Naive thymus-derived CD4-positive, alpha-beta T cell (primary cell): ENCODE measurements at regions of chr3 and their contacts with region 1.

Region 1: GRCh38 chr3:78424656-78425055 is 1343.1 kb downstream of the ROBO1 start:
- DNase-seq: no peak
- ATAC-seq: no peak
- H3K4me3 ChIP-seq: no peak overlapping the region
- H3K4me3 Mint-ChIP-seq: no peak overlapping the region
- H3K27ac ChIP-seq: no peak overlapping the region
- H3K27ac Mint-ChIP-seq: no peak overlapping the region
- H3K4me1 ChIP-seq: no peaks in the 10 kb centered on the region
- H3K4me1 Mint-ChIP-seq: no peaks in the 10 kb centered on the region
- H3K27me3 ChIP-seq: no peaks in the 10 kb centered on the region
- H3K27me3 Mint-ChIP-seq: no peaks in the 10 kb centered on the region

Region 2: GRCh38 chr3:77338195-77338594 is 1086.5 kb before region 1 on chr3:
- CTCF ChIA-PET with region 1: no interaction called
- POLR2A ChIA-PET with region 1: no interaction called
- intact Hi-C with region 1: loop called in 1 of 2 experiments (anchors 5 kb)
- DNase-seq: no peak
- ATAC-seq: no peak
- H3K4me3 ChIP-seq: no peak overlapping the region
- H3K4me3 Mint-ChIP-seq: no peak overlapping the region
- H3K27ac ChIP-seq: no peak overlapping the region
- H3K27ac Mint-ChIP-seq: no peak overlapping the region
- H3K4me1 ChIP-seq: no peaks in the 10 kb centered on the region
- H3K4me1 Mint-ChIP-seq: no peaks in the 10 kb centered on the region
- H3K27me3 ChIP-seq: no peaks in the 10 kb centered on the region
- H3K27me3 Mint-ChIP-seq: no peaks in the 10 kb centered on the region

Region 3: GRCh38 chr3:78506581-78507195 is 82.0 kb after region 1 on chr3:
- CTCF ChIA-PET with region 1: no interaction called
- POLR2A ChIA-PET with region 1: no interaction called
- intact Hi-C with region 1: no loop called
- DNase-seq: no peak
- ATAC-seq: no peak
- H3K4me3 ChIP-seq: no peak overlapping the region
- H3K4me3 Mint-ChIP-seq: no peak overlapping the region
- H3K27ac ChIP-seq: no peak overlapping the region
- H3K27ac Mint-ChIP-seq: no peak overlapping the region
- H3K4me1 ChIP-seq: no peaks in the 10 kb centered on the region
- H3K4me1 Mint-ChIP-seq: no peaks in the 10 kb centered on the region
- H3K27me3 ChIP-seq: no peaks in the 10 kb centered on the region
- H3K27me3 Mint-ChIP-seq: no peaks in the 10 kb centered on the region